ENCODE measurements at regions of chr1 and their contacts with region 1.

Region 1: DNA sequence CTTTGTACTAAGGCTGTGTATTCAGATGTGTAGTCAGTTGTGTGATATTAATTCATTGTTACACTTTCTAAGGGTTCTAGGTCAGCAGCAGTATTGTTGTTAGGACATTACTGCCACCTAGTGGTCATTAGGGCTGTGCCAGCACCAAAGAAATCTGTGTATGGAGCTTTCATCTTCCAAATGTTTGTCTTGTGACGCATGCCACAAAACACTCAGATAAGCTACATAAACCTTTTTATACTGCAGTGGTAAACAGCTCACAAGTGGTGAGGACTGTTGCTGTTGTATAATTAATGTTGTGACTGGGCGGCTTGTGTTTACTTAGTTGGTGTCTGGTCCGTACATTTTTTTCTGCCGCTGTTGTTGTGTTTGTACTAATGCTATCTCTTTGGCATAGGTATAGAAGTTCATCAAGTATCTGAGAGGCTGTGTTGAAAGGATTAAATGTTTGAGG is 51.7 kb downstream of the S1PR1 start:
- DNase-seq: peak; percentile 62
- H3K4me3 Mint-ChIP-seq: no peak overlapping the region
- H3K27ac Mint-ChIP-seq: no peak overlapping the region
- H3K4me1 Mint-ChIP-seq: peaks cover 70% of the 10 kb centered on the region
- H3K27me3 Mint-ChIP-seq: no peaks in the 10 kb centered on the region

Region 2: GRCh38 chr1:100895540-100896483 is 392.7 kb before region 1 on chr1 and contains the start of gene SLC30A7:
- intact Hi-C with region 1: loop called (anchors 1 kb)
- DNase-seq: peak; percentile 92
- H3K4me3 Mint-ChIP-seq: peak within 1 kb of the TSS; percentile 95
- H3K27ac Mint-ChIP-seq: peak within 1 kb of the TSS; percentile 97
- H3K4me1 Mint-ChIP-seq: peaks cover 41% of the 10 kb centered on the region
- H3K27me3 Mint-ChIP-seq: no peaks in the 10 kb centered on the region
- total RNA-seq, gene SLC30A7: 38.6 and 39.4 TPM in 2 replicates

Region 3: GRCh38 chr1:101025657-101026504 is 262.6 kb before region 1 on chr1 and contains the start of gene DPH5:
- intact Hi-C with region 1: loop called (anchors 1 kb)
- DNase-seq: peak; percentile 85
- H3K4me3 Mint-ChIP-seq: peak within 1 kb of the TSS; percentile 99
- H3K27ac Mint-ChIP-seq: peak within 1 kb of the TSS; percentile 94
- H3K4me1 Mint-ChIP-seq: peaks cover 51% of the 10 kb centered on the region
- H3K27me3 Mint-ChIP-seq: no peaks in the 10 kb centered on the region
- total RNA-seq, gene DPH5: 33.5 and 40.0 TPM in 2 replicates

Region 4: DNA sequence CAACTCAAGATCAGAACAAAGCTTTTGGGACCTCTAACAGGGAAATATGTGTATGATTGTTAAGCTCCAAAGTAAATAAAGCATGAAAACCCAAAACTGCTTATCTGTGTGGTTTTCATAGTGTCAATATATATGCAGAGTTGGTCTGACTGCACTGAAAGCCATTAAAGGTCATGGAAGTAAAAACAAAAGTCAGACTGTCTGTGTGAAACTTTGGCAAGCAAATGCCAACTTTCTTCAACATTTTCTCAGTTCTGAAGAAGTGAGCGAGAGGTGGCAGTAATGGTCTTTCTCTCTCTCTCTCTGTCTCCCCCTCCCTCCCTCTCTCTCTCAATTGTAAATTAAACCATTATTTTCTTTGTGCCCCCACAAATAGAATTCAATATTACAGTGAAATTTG is 151.8 kb before region 1 on chr1:
- intact Hi-C with region 1: loop called (anchors 1 kb)
- DNase-seq: no peak
- H3K4me3 Mint-ChIP-seq: peak overlapping the region; percentile 47
- H3K27ac Mint-ChIP-seq: peak overlapping the region; percentile 89
- H3K4me1 Mint-ChIP-seq: peaks cover 67% of the 10 kb centered on the region
- H3K27me3 Mint-ChIP-seq: no peaks in the 10 kb centered on the region

Region 5: DNA sequence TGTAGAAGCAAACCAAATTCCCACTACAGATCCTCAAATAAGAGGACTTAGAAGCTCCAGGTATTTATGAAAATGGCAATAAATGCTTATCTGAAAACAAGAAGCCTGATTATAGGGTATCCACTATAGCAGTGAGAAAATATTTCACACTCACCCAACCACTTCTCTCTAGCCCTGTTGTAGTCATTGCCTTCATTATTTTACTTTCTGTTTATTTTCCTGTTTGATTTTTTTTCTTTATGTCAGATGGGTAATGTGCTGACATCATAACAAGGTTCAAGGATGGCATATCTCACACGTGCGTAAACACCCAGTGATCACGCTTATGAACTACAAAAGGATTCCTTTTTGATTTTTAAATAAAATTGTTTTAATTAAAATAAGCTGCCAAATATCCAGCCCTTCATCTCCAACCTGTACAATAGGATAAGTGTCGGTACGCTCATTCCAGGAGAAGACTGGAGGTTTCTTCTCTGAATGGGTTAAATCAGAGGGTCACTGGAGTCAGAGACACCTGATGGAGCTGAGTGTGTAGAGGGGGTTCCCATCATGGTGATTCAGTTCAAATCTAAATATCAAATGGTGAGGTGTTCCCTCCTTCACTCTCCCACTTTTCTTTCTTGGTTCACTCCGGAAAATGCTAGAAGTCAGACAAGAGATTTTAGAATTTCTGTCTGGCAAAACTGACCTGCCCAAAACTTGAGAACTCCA is 59.9 kb before region 1 on chr1:
- intact Hi-C with region 1: no loop called
- DNase-seq: no peak
- H3K4me3 Mint-ChIP-seq: no peak overlapping the region
- H3K27ac Mint-ChIP-seq: no peak overlapping the region
- H3K4me1 Mint-ChIP-seq: peaks cover 25% of the 10 kb centered on the region
- H3K27me3 Mint-ChIP-seq: no peaks in the 10 kb centered on the region

Region 6: DNA sequence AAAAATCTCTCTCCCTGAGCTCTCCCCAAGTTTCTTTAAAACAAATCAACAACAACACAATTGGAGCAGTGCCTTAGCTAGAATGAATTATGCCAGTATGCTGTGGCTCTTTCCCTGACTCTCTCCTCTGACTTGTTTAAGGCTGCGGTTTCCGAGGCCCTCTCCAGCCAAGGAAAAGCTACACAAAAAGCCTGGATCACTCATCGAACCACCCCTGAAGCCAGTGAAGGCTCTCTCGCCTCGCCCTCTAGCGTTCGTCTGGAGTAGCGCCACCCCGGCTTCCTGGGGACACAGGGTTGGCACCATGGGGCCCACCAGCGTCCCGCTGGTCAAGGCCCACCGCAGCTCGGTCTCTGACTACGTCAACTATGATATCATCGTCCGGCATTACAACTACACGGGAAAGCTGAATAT is 49.8 kb before region 1 on chr1:
- intact Hi-C with region 1: loop called (anchors 1 kb)
- DNase-seq: peak; percentile 80
- H3K4me3 Mint-ChIP-seq: peak overlapping the region; percentile 99
- H3K27ac Mint-ChIP-seq: peak overlapping the region; percentile 96
- H3K4me1 Mint-ChIP-seq: peaks cover 61% of the 10 kb centered on the region
- H3K27me3 Mint-ChIP-seq: no peaks in the 10 kb centered on the region

Region 7: GRCh38 chr1:101309334-101310311 is 21.1 kb after region 1 on chr1:
- intact Hi-C with region 1: loop called (anchors 1 kb)
- DNase-seq: peak; percentile 58
- H3K4me3 Mint-ChIP-seq: peak overlapping the region; percentile 71
- H3K27ac Mint-ChIP-seq: peak overlapping the region; percentile 77
- H3K4me1 Mint-ChIP-seq: peaks cover 51% of the 10 kb centered on the region
- H3K27me3 Mint-ChIP-seq: peaks cover 14% of the 10 kb centered on the region